Endothelial cell of umbilical vein (primary cell): ENCODE measurements at regions of chr5 and their contacts with region 1.

Region 1: GRCh38 chr5:160312134-160312959 is at the start of gene CCNJL:
- DNase-seq: peak; percentile 78
- H3K4me3 ChIP-seq: peak within 1 kb of the TSS; percentile 23 to 80 (median 76)
- H3K27ac ChIP-seq: peak within 1 kb of the TSS; percentile 29
- H3K4me1 ChIP-seq: peaks cover 28% of the 10 kb centered on the region
- H3K27me3 ChIP-seq: no peaks in the 10 kb centered on the region
- CTCF ChIP-seq: no peak
- POLR2A ChIP-seq: peak; percentile 85
- total RNA-seq, gene CCNJL: 17.4 and 20.0 TPM in 2 replicates

Region 2: GRCh38 chr5:160260881-160261815 is 51.2 kb before region 1 on chr5:
- CTCF ChIA-PET with region 1: interaction called, 3 read pairs
- POLR2A ChIA-PET with region 1: no interaction called
- dilution Hi-C with region 1: no loop called
- intact Hi-C with region 1: loop called (anchors 2 kb)
- DNase-seq: peak; percentile 86
- H3K4me3 ChIP-seq: no peak overlapping the region
- H3K27ac ChIP-seq: peak overlapping the region; percentile 4
- H3K4me1 ChIP-seq: peaks cover 30% of the 10 kb centered on the region
- H3K27me3 ChIP-seq: no peaks in the 10 kb centered on the region
- CTCF ChIP-seq: no peak
- POLR2A ChIP-seq: no peak

Region 3: GRCh38 chr5:160271396-160271795 is 41.0 kb before region 1 on chr5:
- CTCF ChIA-PET with region 1: interaction called, 3 read pairs
- POLR2A ChIA-PET with region 1: interaction called, 4 read pairs
- dilution Hi-C with region 1: no loop called
- intact Hi-C with region 1: loop called (anchors 1 kb)
- DNase-seq: peak; percentile 51
- H3K4me3 ChIP-seq: peak overlapping the region in 1 of 3 experiments; percentile 1
- H3K27ac ChIP-seq: peak overlapping the region; percentile 19
- H3K4me1 ChIP-seq: peaks cover 49% of the 10 kb centered on the region
- H3K27me3 ChIP-seq: no peaks in the 10 kb centered on the region
- CTCF ChIP-seq: no peak
- POLR2A ChIP-seq: no peak